Activated naive CD4-positive, alpha-beta T cell treated with anti-CD3 and anti-CD28 coated beads, Interleukin-2, amount 10 ng/mL, durations not matched to agents 7 days and 5 days (primary cell): ENCODE measurements at regions of chr6 and their contacts with region 1.

Region 1: DNA sequence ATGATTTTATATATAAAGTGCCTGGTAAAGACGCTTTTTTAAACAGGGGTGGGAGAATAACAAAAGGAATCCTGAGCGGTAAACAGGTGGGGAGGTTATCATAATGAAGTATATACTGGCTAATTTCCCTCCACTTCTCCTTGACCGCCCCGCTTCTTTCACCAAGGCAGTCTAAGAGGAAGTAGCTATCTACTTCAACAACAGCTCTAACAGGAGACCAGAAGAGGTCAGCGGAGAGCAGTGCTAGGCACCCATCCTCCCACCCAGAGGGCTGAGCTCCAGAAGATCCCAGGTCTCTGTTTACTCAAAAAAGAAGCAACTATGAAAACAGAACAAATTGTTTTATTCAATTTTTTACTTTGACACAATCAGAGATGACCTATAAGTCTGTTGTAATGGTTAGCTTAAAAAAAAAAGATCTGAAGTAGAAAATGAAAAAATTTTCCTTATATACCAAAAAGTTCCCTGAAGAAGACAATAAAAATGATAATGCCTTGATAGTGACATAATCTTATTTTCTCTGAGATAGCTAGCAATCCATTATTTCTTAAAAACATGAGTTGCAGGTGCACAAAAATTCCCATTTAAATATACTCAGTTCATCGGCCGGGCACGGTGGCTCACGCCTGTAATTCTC is 141.1 kb downstream of the PDSS2 start:
- DNase-seq: peak; percentile 52
- H3K4me3 Mint-ChIP-seq: no peak overlapping the region
- H3K27ac Mint-ChIP-seq: no peak overlapping the region
- H3K4me1 Mint-ChIP-seq: no peaks in the 10 kb centered on the region
- H3K27me3 Mint-ChIP-seq: no peaks in the 10 kb centered on the region

Region 2: DNA sequence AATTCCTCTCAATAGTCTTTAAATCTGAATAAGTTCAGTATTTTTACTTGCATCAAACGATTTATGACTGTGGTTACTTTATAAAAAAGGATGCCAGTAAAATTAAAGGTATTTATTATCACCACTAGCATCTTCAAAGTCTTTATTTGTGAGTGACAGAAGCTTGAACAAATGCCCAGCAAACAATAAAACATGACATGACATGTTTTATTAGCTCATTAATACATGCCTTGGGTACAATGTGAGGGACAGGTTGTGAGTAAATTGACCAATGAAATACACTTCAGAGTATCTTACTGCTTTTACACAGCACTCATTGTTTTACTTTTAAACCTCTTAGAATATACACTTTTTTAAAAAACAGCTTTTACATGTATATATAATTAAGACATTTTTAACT is 89.5 kb before region 1 on chr6:
- CTCF ChIA-PET with region 1: no interaction called
- DNase-seq: no peak
- H3K4me3 Mint-ChIP-seq: no peak overlapping the region
- H3K27ac Mint-ChIP-seq: no peak overlapping the region
- H3K4me1 Mint-ChIP-seq: no peaks in the 10 kb centered on the region
- H3K27me3 Mint-ChIP-seq: no peaks in the 10 kb centered on the region

Region 3: DNA sequence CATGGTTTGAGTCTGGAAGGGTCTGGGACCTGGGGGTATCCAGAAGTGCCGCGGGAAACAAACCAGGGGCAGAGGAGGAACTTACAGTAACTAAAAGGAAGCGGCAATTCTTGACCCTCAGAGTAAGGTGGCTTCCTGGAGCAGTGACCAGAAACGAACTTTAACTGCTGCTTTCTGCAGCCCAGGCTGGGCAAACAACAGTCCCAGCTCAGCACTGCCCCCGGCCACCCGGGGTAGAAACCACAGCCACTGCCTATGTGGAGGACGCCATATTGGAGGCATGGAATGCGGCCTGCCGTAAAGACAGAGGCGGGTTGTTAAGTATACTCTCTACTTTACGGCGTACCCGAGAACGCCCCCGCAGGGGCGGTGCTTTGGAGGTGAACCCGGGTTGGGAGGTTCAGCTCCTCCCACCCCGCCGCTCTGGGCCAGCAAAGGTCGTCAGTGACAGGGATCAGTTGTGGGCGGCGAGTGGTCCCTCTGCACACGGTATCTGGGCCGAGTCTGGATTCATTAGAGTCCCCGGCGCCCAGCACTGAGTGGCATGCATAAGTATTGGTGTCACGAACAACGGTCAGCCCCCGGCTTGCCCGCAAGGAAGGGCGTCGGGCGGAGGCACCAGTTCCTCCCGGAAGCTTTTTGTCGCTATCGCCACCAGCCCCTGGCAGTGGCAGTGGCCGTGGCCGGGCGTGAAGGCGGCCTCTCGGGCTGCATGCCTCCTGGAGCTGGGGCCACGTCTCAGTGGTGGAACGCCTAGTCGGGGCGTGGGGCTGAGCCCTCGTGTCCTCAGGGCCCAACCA is 141.3 kb after region 1 on chr6 and contains the start of gene PDSS2:
- CTCF ChIA-PET with region 1: interaction called, 11 read pairs
- DNase-seq: peak; percentile 99
- H3K4me3 Mint-ChIP-seq: peak within 1 kb of the TSS; percentile 78
- H3K27ac Mint-ChIP-seq: peak within 1 kb of the TSS; percentile 81
- H3K4me1 Mint-ChIP-seq: peaks cover 28% of the 10 kb centered on the region
- H3K27me3 Mint-ChIP-seq: no peaks in the 10 kb centered on the region

Region 4: DNA sequence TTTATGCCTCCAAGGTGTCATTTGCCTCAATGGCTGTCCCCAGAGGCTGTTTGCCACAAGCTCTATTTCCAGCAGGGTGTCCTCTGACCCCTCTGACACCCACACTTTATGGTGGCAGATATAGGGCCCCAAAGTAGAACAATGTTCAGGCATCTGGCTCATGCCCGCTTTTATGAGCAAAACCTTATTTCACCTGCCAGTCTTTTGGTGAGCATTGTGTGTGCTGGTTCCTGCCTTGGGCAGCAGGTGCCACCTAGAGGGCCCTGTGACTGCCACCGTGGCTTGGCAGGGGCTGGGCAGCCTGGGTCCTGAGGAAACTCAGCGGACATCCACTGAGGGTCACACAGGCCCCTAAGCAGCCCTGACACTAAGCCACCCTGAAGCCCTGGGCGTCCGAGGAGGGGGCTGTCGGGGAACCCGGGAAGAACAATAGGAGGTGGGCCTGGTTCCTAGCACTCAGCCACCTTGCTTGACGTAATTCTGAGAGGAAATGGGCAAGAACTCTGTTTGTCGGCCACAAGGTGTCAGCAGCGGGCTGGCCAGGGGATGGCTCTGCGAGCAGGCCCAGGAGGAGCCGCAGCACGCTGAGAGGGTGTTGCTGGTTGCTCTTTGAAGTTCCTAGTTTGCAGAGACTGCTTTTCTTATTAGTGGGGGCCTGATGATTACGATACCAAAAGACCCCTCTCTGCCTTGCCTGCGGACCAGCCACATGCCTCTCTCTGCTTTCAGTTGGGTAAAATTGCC is 356.9 kb after region 1 on chr6:
- CTCF ChIA-PET with region 1: interaction called, 16 read pairs
- DNase-seq: peak; percentile 93
- H3K4me3 Mint-ChIP-seq: peak overlapping the region; percentile 46
- H3K27ac Mint-ChIP-seq: peak overlapping the region; percentile 54
- H3K4me1 Mint-ChIP-seq: peaks cover 21% of the 10 kb centered on the region
- H3K27me3 Mint-ChIP-seq: peaks cover 17% of the 10 kb centered on the region

Region 5: GRCh38 chr6:107964671-107965340 is 646.6 kb after region 1 on chr6:
- CTCF ChIA-PET with region 1: no interaction called
- DNase-seq: no peak
- H3K4me3 Mint-ChIP-seq: no peak overlapping the region
- H3K27ac Mint-ChIP-seq: no peak overlapping the region
- H3K4me1 Mint-ChIP-seq: no peaks in the 10 kb centered on the region
- H3K27me3 Mint-ChIP-seq: peaks cover 5% of the 10 kb centered on the region